CD8-positive, alpha-beta memory T cell (primary cell): ENCODE measurements at regions of chr12 and their contacts with region 1.

Region 1: GRCh38 chr12:67211029-67211428 is 58.1 kb upstream of the CAND1 start:
- DNase-seq: no peak
- H3K4me3 ChIP-seq: no peak overlapping the region
- H3K4me3 Mint-ChIP-seq: no peak overlapping the region
- H3K27ac ChIP-seq: no peak overlapping the region
- H3K27ac Mint-ChIP-seq: no peak overlapping the region
- H3K4me1 ChIP-seq: no peaks in the 10 kb centered on the region
- H3K4me1 Mint-ChIP-seq: no peaks in the 10 kb centered on the region
- H3K27me3 ChIP-seq: no peaks in the 10 kb centered on the region
- H3K27me3 Mint-ChIP-seq: peaks cover 11 to 36% of the 10 kb centered on the region in 2 donors

Region 2: DNA sequence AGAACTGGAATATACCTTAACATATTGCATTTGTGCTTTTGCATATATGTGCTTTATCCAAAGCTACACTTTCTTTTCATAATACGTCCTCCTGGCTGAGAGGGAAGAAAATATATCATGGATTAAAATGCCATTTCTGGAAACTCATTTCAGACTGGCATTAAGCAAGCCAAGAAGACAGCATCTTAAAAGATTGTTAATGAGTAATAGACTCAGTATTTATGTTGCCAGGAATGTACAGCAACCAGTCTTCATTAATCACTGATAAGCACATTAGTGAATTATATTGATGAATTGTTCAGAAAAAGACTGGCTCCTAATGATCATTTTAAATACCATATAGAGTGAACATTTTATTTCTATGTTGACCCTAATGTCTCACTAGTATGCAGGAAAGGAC is 643.3 kb after region 1 on chr12:
- CTCF ChIA-PET with region 1: no interaction called
- POLR2A ChIA-PET with region 1: interaction called, 10 read pairs
- DNase-seq: no peak
- H3K4me3 ChIP-seq: no peak overlapping the region
- H3K4me3 Mint-ChIP-seq: no peak overlapping the region
- H3K27ac ChIP-seq: no peak overlapping the region
- H3K27ac Mint-ChIP-seq: no peak overlapping the region
- H3K4me1 ChIP-seq: no peaks in the 10 kb centered on the region
- H3K4me1 Mint-ChIP-seq: no peaks in the 10 kb centered on the region
- H3K27me3 ChIP-seq: no peaks in the 10 kb centered on the region
- H3K27me3 Mint-ChIP-seq: peaks cover 6 to 12% of the 10 kb centered on the region in 2 donors